Activated naive CD4-positive, alpha-beta T cell treated with anti-CD3 and anti-CD28 coated beads for 36 hours (primary cell): ENCODE measurements at regions of chr17 and their contacts with region 1.

Region 1: GRCh38 chr17:70552230-70552981 is 383.1 kb downstream of the KCNJ2 start:
- DNase-seq: no peak
- H3K4me3 Mint-ChIP-seq: no peak overlapping the region
- H3K27ac Mint-ChIP-seq: no peak overlapping the region
- H3K4me1 Mint-ChIP-seq: no peaks in the 10 kb centered on the region
- H3K27me3 Mint-ChIP-seq: no peaks in the 10 kb centered on the region

Region 2: GRCh38 chr17:69567130-69567529 is 985.3 kb before region 1 on chr17:
- CTCF ChIA-PET with region 1: interaction called, 4 read pairs
- intact Hi-C with region 1: loop called (anchors 5 kb)
- DNase-seq: no peak
- H3K4me3 Mint-ChIP-seq: no peak overlapping the region
- H3K27ac Mint-ChIP-seq: no peak overlapping the region
- H3K4me1 Mint-ChIP-seq: no peaks in the 10 kb centered on the region
- H3K27me3 Mint-ChIP-seq: peaks cover 5% of the 10 kb centered on the region

Region 3: DNA sequence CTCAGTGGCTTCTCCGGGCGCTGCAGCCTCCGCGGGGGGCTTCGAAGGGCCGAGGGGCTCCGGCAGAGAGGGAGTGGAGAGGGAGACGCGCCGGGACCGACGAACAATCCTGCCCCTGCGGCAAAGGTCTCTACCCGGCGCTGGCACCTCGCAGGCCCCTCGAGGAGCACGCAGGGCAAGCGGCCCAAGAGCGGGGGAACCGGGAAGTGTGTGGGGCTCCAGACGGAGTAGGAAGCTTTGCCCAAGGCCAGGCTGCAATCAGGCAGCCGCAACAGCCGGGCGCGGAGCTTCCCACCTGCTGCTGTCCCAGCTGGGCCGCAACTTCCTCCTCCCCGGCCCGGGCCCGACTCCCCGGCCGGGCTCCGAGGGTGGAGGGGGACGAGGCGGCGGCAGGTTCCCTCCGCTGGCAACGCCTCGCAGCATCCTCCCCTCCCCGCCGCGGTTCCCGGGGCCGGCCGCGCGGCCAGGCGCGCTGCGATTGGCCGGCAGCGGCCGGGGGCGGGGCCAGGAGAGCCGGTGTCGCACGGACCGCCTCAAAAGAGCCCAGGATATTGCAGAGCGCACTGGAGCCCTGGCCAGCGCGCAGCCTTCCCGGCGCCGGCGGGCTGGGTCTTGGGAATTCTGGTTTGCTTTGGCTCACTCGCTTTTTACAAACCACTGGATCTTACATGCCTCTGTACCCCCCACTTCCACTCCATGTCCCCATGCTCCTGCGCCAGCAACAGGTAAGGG is 383.3 kb before region 1 on chr17 and contains the start of gene KCNJ2:
- CTCF ChIA-PET with region 1: no interaction called
- intact Hi-C with region 1: loop called (anchors 5 kb)
- DNase-seq: peak; percentile 56
- H3K4me3 Mint-ChIP-seq: peak within 1 kb of the TSS; percentile 70
- H3K27ac Mint-ChIP-seq: no peak within 1 kb of the TSS
- H3K4me1 Mint-ChIP-seq: peaks cover 15% of the 10 kb centered on the region
- H3K27me3 Mint-ChIP-seq: peaks cover 62% of the 10 kb centered on the region
- total RNA-seq, gene KCNJ2: not detected

Region 4: GRCh38 chr17:70499067-70499786 is 53.2 kb before region 1 on chr17:
- CTCF ChIA-PET with region 1: no interaction called
- intact Hi-C with region 1: no loop called
- DNase-seq: no peak
- H3K4me3 Mint-ChIP-seq: no peak overlapping the region
- H3K27ac Mint-ChIP-seq: no peak overlapping the region
- H3K4me1 Mint-ChIP-seq: no peaks in the 10 kb centered on the region
- H3K27me3 Mint-ChIP-seq: no peaks in the 10 kb centered on the region